ENCODE measurements at regions of chr6 and their contacts with region 1.

Region 1: GRCh38 chr6:13328076-13328874 is at the start of gene TBC1D7:
- DNase-seq: peak; percentile 89 to 97 (median 93)
- ATAC-seq: peak; percentile 92
- H3K4me3 ChIP-seq: peak within 1 kb of the TSS; percentile 99
- H3K4me3 Mint-ChIP-seq: peak within 1 kb of the TSS; percentile 83 to 96 (median 91)
- H3K27ac ChIP-seq: peak within 1 kb of the TSS; percentile 97
- H3K27ac Mint-ChIP-seq: peak within 1 kb of the TSS; percentile 94 to 99 (median 97)
- H3K4me1 ChIP-seq: peaks cover 5 to 15% of the 10 kb centered on the region in 2 donors
- H3K4me1 Mint-ChIP-seq: peaks cover 5 to 34% (median 31%) of the 10 kb centered on the region in 7 donors
- H3K27me3 ChIP-seq: no peaks in the 10 kb centered on the region
- H3K27me3 Mint-ChIP-seq: no peaks in the 10 kb centered on the region
- total RNA-seq, gene TBC1D7: 14.8 to 34.6 (median 17.0) TPM

Region 2: GRCh38 chr6:11381801-11382513 is 1946.3 kb before region 1 on chr6:
- CTCF ChIA-PET with region 1: no interaction called
- POLR2A ChIA-PET with region 1: no interaction called
- intact Hi-C with region 1: loop called in 1 of 2 experiments (anchors 5 kb)
- DNase-seq: peak; percentile 43 to 88 (median 82)
- ATAC-seq: peak; percentile 95
- H3K4me3 ChIP-seq: peak overlapping the region; percentile 70
- H3K4me3 Mint-ChIP-seq: peak overlapping the region; percentile 76 to 96 (median 91)
- H3K27ac ChIP-seq: peak overlapping the region; percentile 79
- H3K27ac Mint-ChIP-seq: peak overlapping the region; percentile 79 to 94 (median 91)
- H3K4me1 ChIP-seq: peaks cover 23 to 28% of the 10 kb centered on the region in 2 donors
- H3K4me1 Mint-ChIP-seq: peaks cover 42 to 85% (median 66%) of the 10 kb centered on the region in 7 donors
- H3K27me3 ChIP-seq: no peaks in the 10 kb centered on the region
- H3K27me3 Mint-ChIP-seq: no peaks in the 10 kb centered on the region

Region 3: GRCh38 chr6:11484441-11484840 is 1843.8 kb before region 1 on chr6:
- CTCF ChIA-PET with region 1: no interaction called
- POLR2A ChIA-PET with region 1: no interaction called
- intact Hi-C with region 1: no loop called
- DNase-seq: no peak
- ATAC-seq: no peak
- H3K4me3 ChIP-seq: no peak overlapping the region
- H3K4me3 Mint-ChIP-seq: no peak overlapping the region
- H3K27ac ChIP-seq: no peak overlapping the region
- H3K27ac Mint-ChIP-seq: no peak overlapping the region
- H3K4me1 ChIP-seq: no peaks in the 10 kb centered on the region
- H3K4me1 Mint-ChIP-seq: no peaks in the 10 kb centered on the region
- H3K27me3 ChIP-seq: no peaks in the 10 kb centered on the region
- H3K27me3 Mint-ChIP-seq: peaks cover 0 to 5% (median 0%) of the 10 kb centered on the region in 5 donors

Region 4: GRCh38 chr6:12637960-12638641 is 690.2 kb before region 1 on chr6:
- CTCF ChIA-PET with region 1: no interaction called
- POLR2A ChIA-PET with region 1: no interaction called
- intact Hi-C with region 1: loop called (anchors 5 to 10 kb)
- DNase-seq: peak in 2 of 9 donors; percentile 3 to 37
- ATAC-seq: peak; percentile 65
- H3K4me3 ChIP-seq: no peak overlapping the region
- H3K4me3 Mint-ChIP-seq: no peak overlapping the region
- H3K27ac ChIP-seq: no peak overlapping the region
- H3K27ac Mint-ChIP-seq: no peak overlapping the region
- H3K4me1 ChIP-seq: no peaks in the 10 kb centered on the region
- H3K4me1 Mint-ChIP-seq: peaks cover 0 to 3% (median 0%) of the 10 kb centered on the region in 7 donors
- H3K27me3 ChIP-seq: no peaks in the 10 kb centered on the region
- H3K27me3 Mint-ChIP-seq: peaks cover 15 to 54% (median 45%) of the 10 kb centered on the region in 5 donors

Region 5: GRCh38 chr6:13302751-13303667 is 25.3 kb before region 1 on chr6:
- CTCF ChIA-PET with region 1: no interaction called
- POLR2A ChIA-PET with region 1: no interaction called
- intact Hi-C with region 1: loop called in 1 of 2 experiments (anchors 1 kb)
- DNase-seq: peak in 1 of 9 donors; percentile 49
- ATAC-seq: peak; percentile 83
- H3K4me3 ChIP-seq: no peak overlapping the region
- H3K4me3 Mint-ChIP-seq: peak overlapping the region in 1 of 10 donors; percentile 74
- H3K27ac ChIP-seq: no peak overlapping the region
- H3K27ac Mint-ChIP-seq: peak overlapping the region in 3 of 9 donors; percentile 14 to 88 (median 31)
- H3K4me1 ChIP-seq: peaks cover 0 to 14% of the 10 kb centered on the region in 2 donors
- H3K4me1 Mint-ChIP-seq: peaks cover 0 to 27% (median 10%) of the 10 kb centered on the region in 7 donors
- H3K27me3 ChIP-seq: no peaks in the 10 kb centered on the region
- H3K27me3 Mint-ChIP-seq: no peaks in the 10 kb centered on the region

Region 6: GRCh38 chr6:13574149-13574570 is 245.9 kb after region 1 on chr6:
- CTCF ChIA-PET with region 1: interaction called, 4 read pairs
- POLR2A ChIA-PET with region 1: interaction called, 20 read pairs
- intact Hi-C with region 1: loop called (anchors 1 kb)
- DNase-seq: peak; percentile 91 to 96 (median 94)
- ATAC-seq: peak; percentile 89
- H3K4me3 ChIP-seq: peak overlapping the region; percentile 93
- H3K4me3 Mint-ChIP-seq: peak overlapping the region; percentile 88 to 99 (median 95)
- H3K27ac ChIP-seq: peak overlapping the region; percentile 80
- H3K27ac Mint-ChIP-seq: peak overlapping the region; percentile 88 to 99 (median 95)
- H3K4me1 ChIP-seq: peaks cover 5 to 13% of the 10 kb centered on the region in 2 donors
- H3K4me1 Mint-ChIP-seq: peaks cover 10 to 44% (median 28%) of the 10 kb centered on the region in 7 donors
- H3K27me3 ChIP-seq: no peaks in the 10 kb centered on the region
- H3K27me3 Mint-ChIP-seq: no peaks in the 10 kb centered on the region

Region 7: DNA sequence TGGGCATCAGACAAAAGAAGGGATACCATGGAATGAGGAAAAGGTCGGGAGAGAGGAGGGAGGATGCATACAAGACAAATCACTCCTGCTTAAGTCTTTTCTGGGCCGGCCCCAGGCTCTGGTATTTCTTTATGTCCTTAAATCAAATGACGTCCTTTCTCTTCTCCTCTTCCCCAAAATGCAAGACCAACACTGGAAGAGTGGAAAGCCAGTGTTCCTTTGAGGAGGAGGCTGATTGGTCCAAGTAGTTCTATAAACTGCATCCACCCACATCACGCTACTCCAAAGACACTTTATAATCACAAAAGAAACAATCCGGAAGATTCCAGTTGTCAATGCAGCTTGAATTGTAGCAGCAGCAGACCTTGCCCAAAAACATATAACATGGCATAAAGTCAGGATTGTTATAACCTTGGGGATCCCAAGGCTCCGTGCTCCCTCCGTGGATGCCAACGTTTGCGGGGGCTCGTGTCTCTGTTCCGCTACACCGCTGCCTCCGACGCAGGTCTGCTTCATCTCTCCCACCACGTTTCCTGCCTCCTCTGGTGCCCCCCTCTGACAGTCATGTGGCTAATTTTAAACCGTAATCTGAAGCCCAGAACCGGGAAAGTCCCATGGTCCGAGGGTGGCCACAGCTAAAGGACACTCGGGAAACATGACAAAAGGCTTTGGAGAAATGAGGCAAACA is 439.0 kb after region 1 on chr6:
- CTCF ChIA-PET with region 1: no interaction called
- POLR2A ChIA-PET with region 1: no interaction called
- intact Hi-C with region 1: loop called in 1 of 2 experiments (anchors 2 kb)
- DNase-seq: peak in 8 of 9 donors; percentile 12 to 48 (median 30)
- ATAC-seq: peak; percentile 66
- H3K4me3 ChIP-seq: peak overlapping the region; percentile 51
- H3K4me3 Mint-ChIP-seq: peak overlapping the region; percentile 53 to 86 (median 76)
- H3K27ac ChIP-seq: no peak overlapping the region
- H3K27ac Mint-ChIP-seq: peak overlapping the region in 7 of 9 donors; percentile 6 to 92 (median 59)
- H3K4me1 ChIP-seq: peaks cover 8 to 13% of the 10 kb centered on the region in 2 donors
- H3K4me1 Mint-ChIP-seq: peaks cover 10 to 49% (median 30%) of the 10 kb centered on the region in 7 donors
- H3K27me3 ChIP-seq: no peaks in the 10 kb centered on the region
- H3K27me3 Mint-ChIP-seq: peaks cover 0 to 6% (median 0%) of the 10 kb centered on the region in 5 donors

Measured in naive thymus-derived CD4-positive, alpha-beta T cell (primary cell).